ENCODE measurements at regions of chr3 and their contacts with region 1.

Region 1: DNA sequence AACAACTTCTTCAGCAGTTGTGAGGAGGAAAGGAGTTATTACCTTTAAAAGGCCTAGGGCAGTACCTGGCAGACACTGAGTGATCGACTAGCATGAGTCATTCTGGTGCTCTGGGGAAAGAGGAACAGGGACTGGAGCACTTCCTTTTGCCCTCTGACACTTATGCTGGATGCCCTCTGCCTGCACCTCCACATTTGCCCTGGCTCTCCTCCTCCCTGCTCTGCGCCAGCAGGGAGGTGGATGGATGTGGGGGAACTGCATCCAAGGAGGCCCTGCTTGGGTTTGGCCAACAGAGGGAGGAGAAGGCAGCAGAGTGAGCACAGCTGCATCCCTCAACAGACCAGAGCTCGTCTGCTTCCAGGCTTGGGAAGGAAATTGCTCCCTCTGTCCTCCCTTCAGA is 75.1 kb downstream of the SEMA5B start:
- DNase-seq: peak in 1 of 2 donors; percentile 21
- ATAC-seq: peak in 5 of 8 donors; percentile 9 to 50 (median 32)
- H3K4me3 ChIP-seq: no peak overlapping the region
- H3K27ac ChIP-seq: peak overlapping the region in 3 of 10 donors; percentile 17 to 86 (median 53)
- H3K4me1 ChIP-seq: peaks cover 7 to 61% (median 23%) of the 10 kb centered on the region in 9 donors
- H3K27me3 ChIP-seq: no peaks in the 10 kb centered on the region
- CTCF ChIP-seq: peak in 7 of 9 donors; percentile 18 to 50 (median 35)

Region 2: DNA sequence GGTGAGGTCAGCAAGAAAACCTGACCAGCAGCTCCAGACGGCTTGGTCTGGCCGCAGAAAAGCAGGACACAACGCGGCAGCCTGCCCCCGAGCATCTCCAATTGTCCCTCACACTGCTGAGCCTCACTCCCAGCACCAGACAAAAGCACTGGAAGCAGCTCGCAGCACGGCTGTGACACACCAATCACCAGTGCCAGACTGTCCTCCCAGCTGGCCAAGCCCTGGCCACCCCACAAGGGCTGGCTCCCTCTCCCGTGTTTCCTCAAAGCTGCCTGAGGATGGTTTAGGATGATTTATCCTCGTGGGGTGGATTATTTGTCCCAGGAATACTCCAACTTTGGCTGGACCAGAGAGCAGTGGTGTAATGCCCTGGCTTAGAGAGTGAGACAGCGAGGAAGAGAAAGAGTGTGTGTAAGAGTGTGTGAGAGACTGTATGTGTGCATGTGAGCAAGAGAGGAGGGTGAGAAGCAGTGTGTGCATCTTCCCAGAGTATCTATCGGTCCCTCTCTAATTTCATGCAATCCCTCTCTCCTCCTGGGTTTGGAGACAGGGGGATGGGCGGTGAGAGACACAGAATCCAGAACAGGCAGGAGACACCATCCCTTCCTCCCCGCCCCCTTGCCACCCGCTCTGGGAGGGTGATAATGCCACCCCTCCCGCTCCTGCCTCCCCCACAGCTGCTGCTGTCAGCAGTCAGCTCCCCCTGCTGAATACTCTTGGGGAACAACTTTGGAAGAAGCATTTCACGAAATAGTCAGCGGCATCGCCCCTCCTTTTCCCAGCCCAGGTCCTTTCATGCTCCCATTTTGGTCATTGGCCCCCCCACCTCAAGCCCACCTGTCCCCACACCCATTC is 40.8 kb after region 1 on chr3:
- intact Hi-C with region 1: loop called in 2 of 10 experiments (anchors 5 kb)
- DNase-seq: no peak
- ATAC-seq: peak in 5 of 8 donors; percentile 18 to 55 (median 31)
- H3K4me3 ChIP-seq: no peak overlapping the region
- H3K27ac ChIP-seq: no peak overlapping the region
- H3K4me1 ChIP-seq: peaks cover 0 to 56% (median 28%) of the 10 kb centered on the region in 9 donors
- H3K27me3 ChIP-seq: peaks cover 0 to 14% (median 0%) of the 10 kb centered on the region in 7 donors
- CTCF ChIP-seq: no peak

Region 3: DNA sequence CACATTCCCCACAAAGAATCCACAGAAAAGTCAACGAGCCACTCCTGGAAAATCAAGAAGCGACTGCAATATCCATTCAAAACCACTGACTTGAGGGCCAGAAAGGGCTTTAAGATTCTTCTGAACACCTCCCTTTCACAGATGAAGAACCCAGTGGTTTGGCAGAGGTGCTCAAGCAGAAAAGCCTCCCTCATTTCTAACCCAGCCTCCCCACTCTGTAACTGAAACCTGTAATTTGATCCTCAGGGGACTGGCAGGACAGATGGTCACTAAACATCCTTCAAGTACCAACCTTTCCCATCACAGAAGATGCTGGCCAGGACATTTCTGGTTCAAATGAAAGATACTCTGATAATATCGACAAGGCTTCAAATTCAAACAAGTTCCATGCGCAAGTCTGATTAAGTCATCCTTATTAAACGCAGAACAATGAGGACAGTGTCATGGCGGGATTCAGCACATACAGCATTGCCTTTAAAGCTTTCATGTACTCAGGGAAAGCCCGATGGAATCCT is 69.5 kb after region 1 on chr3:
- intact Hi-C with region 1: loop called in 3 of 10 experiments (anchors 2 to 5 kb)
- DNase-seq: no peak
- ATAC-seq: no peak
- H3K4me3 ChIP-seq: no peak overlapping the region
- H3K27ac ChIP-seq: no peak overlapping the region
- H3K4me1 ChIP-seq: peaks cover 2 to 45% (median 17%) of the 10 kb centered on the region in 9 donors
- H3K27me3 ChIP-seq: peaks cover 0 to 62% (median 15%) of the 10 kb centered on the region in 7 donors
- CTCF ChIP-seq: no peak